ENCODE measurements at regions of chr4 and their contacts with region 1.

Region 1: DNA sequence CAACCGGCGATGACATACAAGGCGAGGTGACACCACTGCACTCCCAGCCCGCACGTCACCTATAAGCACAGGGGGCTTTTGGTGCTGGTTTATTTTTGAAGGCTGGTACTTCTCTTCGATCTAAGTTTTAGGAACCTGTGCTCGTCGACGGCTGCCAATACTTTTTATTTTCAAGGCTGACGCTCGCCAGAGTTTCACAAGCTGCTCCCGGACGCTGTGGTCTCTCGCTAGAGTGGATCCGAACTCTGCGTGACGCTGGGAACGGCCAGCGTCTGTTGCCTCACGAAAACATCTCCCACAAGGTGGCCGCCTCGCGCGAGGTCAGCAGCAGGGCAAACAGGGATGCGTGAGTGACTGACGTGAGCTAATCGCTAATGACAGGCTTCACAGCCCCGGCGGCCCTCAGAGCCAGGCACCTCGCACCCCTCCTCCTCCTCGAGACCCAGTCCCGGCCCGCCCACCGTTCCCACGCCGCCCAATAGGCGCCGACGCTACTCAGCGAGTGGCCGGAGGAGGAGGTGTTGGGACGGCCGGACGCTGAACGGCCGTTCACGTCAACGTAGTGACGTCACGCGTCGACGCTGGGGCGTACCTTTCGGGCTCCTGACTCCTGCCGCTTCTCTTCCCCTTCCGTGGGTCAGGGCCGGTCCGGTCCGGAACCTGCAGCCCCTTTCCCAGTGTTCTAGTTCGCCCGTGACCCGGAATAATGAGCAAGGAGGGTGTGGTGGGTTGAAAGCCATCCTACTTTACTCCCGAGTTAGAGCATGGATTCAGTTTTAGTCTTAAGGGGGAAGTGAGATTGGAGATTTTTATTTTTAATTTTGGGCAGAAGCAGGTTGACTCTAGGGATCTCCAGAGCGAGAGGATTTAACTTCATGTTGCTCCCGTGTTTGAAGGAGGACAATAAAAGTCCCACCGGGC is at the start of gene CLCN3:
- DNase-seq: peak; percentile 97 to 100
- ATAC-seq: peak; percentile 95 to 99 (median 96)
- H3K4me3 ChIP-seq: peak within 1 kb of the TSS; percentile 90
- H3K27ac ChIP-seq: peak within 1 kb of the TSS; percentile 95
- H3K4me1 ChIP-seq: peaks cover 17% of the 10 kb centered on the region
- H3K27me3 ChIP-seq: no peaks in the 10 kb centered on the region
- CTCF ChIP-seq: no peak
- total RNA-seq, gene CLCN3: 24.3 to 32.3 (median 25.6) TPM

Region 2: GRCh38 chr4:169659716-169660670 is 39.8 kb after region 1 on chr4:
- intact Hi-C with region 1: loop called (anchors 2 kb)
- DNase-seq: peak; percentile 33 to 70
- ATAC-seq: peak; percentile 96 to 98 (median 97)
- H3K4me3 ChIP-seq: peak overlapping the region; percentile 70
- H3K27ac ChIP-seq: peak overlapping the region; percentile 83
- H3K4me1 ChIP-seq: peaks cover 54% of the 10 kb centered on the region
- H3K27me3 ChIP-seq: no peaks in the 10 kb centered on the region
- CTCF ChIP-seq: no peak

Region 3: DNA sequence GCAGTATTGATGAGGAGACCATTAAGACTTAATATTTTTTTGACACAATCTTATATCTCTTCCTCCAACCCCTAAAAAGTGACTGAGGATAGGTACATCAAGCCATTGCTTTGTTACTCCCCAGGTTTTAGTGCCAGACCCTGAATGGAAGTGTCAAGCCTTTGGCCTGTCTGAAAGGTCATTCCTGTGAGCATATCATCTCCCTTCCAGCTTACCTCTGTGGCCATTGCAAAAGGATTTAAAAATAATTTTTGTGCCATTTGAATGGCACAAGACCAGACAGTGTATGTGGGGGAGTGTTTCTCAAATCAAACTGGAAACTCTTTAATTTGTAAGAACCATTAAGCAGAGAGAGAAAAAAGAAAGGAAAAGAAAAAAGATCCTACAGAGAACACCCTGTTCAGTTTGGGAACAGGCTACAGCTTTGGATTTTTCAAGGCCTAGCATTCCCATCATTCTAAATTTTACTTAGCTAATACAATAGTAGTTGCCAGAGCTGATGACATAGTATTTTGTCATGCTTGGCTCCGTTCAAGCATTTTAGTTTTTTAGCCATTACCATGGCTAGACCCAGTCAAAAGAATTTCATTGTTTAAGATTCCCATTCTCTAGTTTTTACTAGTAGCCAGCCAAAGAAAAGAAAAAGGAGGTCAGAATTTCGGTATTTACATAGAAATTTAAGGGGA is 87.9 kb after region 1 on chr4:
- intact Hi-C with region 1: loop called in 1 of 2 experiments (anchors 5 kb)
- DNase-seq: no peak
- ATAC-seq: peak in 3 of 4 donors; percentile 21 to 61 (median 60)
- H3K4me3 ChIP-seq: no peak overlapping the region
- H3K27ac ChIP-seq: peak overlapping the region; percentile 17
- H3K4me1 ChIP-seq: peaks cover 11% of the 10 kb centered on the region
- H3K27me3 ChIP-seq: no peaks in the 10 kb centered on the region
- CTCF ChIP-seq: no peak

Region 4: DNA sequence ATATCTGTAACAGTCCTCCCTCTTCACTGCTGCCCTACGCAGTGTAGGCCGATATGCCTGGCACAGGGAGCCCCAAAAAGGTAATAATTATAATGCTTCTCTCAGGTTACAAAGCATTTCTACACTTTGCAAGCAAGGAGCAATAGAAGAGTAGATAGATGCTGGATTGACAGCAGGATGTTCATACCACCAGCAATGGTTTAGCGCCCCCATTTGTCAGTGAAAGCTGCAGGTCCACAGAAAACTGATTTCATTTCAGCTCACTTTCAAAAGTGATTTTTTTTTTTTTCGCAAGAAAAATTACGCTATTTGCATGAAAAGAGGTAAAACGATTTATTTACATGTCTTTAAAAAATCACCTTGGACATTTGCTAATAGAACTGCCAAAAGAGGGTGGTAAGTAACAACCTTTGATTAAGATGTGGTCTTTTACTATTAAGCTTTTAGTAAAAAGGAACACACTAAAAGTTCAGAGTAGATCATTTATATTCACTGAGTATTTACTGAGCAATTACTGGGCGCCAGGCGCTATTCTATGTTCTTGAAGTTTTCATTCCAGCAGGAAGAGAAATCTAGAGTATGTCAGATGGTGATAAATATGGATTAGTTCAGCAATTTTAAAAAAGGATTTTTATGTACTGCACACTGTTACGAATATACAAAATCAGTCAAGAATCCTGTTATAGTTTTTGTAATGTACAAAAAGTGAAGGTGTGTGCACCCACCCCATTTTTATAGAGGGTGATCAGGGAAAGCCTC is 103.2 kb after region 1 on chr4:
- intact Hi-C with region 1: loop called in 1 of 2 experiments (anchors 5 kb)
- DNase-seq: no peak
- ATAC-seq: peak in 1 of 4 donors; percentile 47
- H3K4me3 ChIP-seq: no peak overlapping the region
- H3K27ac ChIP-seq: no peak overlapping the region
- H3K4me1 ChIP-seq: no peaks in the 10 kb centered on the region
- H3K27me3 ChIP-seq: no peaks in the 10 kb centered on the region
- CTCF ChIP-seq: no peak

Region 5: DNA sequence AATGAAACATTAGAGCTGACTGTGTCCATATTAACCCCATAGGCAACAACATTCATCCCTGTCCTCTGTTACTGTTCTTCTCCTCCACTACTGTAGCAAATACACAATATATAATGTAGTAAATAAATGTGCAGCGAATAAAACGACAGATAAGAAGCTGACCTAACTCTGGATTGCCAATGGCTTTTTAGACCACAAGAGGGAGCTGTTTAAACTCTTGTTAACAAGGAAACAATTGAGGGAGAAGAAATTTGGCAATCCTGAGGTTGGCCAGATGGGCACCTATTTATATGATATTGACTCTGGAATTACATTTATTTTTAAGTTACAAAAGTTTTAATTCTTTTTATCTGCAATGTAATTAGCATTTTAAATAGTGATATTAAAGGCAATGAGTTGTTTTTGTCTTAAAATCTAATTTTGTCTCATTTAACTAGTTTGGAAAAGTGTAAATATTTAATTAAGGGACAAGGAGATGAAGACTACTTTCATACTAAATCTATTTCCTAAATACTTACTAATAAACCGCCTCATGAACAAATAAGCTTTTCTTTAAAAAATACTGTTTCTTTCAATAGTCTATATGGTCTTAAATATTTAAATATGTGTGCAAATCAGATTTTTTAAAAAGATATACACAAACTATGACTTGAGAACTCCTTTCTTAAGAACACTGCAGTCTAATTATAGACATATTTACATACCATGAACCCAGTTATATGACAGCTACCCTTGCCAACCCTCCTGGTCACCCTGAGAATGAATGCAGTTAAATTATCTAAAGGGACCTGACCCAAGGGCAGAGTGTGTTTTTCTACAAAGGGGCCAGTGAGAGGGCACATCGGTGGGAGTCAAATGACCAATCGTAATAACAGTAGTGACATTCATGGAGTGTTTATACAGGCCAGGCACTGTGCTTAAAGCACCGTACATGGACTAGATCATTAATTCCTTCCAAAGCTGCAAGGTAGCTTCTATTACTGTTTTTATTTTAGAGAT is 190.4 kb after region 1 on chr4:
- intact Hi-C with region 1: loop called in 1 of 2 experiments (anchors 10 kb)
- DNase-seq: no peak
- ATAC-seq: peak in 3 of 4 donors; percentile 47 to 72 (median 49)
- H3K4me3 ChIP-seq: no peak overlapping the region
- H3K27ac ChIP-seq: no peak overlapping the region
- H3K4me1 ChIP-seq: no peaks in the 10 kb centered on the region
- H3K27me3 ChIP-seq: no peaks in the 10 kb centered on the region
- CTCF ChIP-seq: peak; percentile 88

Region 6: GRCh38 chr4:170027181-170027829 is 407.1 kb after region 1 on chr4:
- intact Hi-C with region 1: loop called (anchors 5 kb)
- DNase-seq: peak; percentile 96 to 97
- ATAC-seq: peak; percentile 92 to 95 (median 94)
- H3K4me3 ChIP-seq: peak overlapping the region; percentile 91
- H3K27ac ChIP-seq: peak overlapping the region; percentile 85
- H3K4me1 ChIP-seq: no peaks in the 10 kb centered on the region
- H3K27me3 ChIP-seq: no peaks in the 10 kb centered on the region
- CTCF ChIP-seq: no peak

Measured in psoas muscle (tissue), 8 donors.